Endothelial cell of umbilical vein (primary cell): ENCODE measurements at regions of chr2 and their contacts with region 1.

Region 1: DNA sequence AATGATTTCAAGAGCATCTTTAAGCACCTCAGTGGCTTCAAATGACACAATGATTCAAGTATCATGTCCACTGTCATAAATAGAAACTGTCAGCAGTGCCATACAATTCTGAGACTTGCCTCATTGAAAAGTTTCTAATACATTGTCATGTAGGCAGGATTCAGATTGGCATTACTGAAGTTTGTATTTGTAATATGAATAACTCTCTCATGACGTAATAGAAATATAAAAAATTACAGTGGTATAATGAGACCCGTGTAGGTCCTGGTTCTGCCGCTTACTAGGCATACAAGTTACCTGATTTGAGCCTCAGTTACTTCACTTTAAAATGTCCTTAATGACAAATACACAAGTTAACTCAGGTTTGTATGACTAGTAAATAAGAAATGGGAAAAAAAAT is 1536.2 kb upstream of the NXPH2 start:
- DNase-seq: no peak
- H3K4me3 ChIP-seq: no peak overlapping the region
- H3K27ac ChIP-seq: no peak overlapping the region
- H3K4me1 ChIP-seq: no peaks in the 10 kb centered on the region
- H3K27me3 ChIP-seq: no peaks in the 10 kb centered on the region
- CTCF ChIP-seq: no peak
- POLR2A ChIP-seq: no peak

Region 2: DNA sequence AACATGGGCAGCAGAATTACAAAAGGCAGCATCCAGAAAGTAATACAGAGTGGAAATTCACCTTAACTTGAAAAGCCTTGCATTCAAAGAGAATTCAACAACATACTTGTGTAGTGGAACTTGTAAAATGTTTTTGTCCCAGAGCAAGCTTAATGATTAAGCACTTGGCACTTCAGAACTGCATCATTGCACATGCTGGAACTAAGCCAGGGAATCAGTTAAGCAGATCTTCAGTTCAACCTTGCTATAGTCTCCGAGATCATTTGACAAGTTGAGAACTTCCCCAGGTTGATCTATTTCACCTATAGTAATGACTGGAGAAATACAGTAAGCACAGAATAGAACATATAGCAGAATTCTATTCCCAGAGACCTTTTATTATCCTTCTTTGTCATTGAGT is 199.0 kb before region 1 on chr2:
- CTCF ChIA-PET with region 1: no interaction called
- POLR2A ChIA-PET with region 1: no interaction called
- dilution Hi-C with region 1: no loop called
- intact Hi-C with region 1: loop called (anchors 10 kb)
- DNase-seq: no peak
- H3K4me3 ChIP-seq: no peak overlapping the region
- H3K27ac ChIP-seq: no peak overlapping the region
- H3K4me1 ChIP-seq: no peaks in the 10 kb centered on the region
- H3K27me3 ChIP-seq: no peaks in the 10 kb centered on the region
- CTCF ChIP-seq: no peak
- POLR2A ChIP-seq: no peak

Region 3: GRCh38 chr2:140205093-140205492 is 111.3 kb before region 1 on chr2:
- CTCF ChIA-PET with region 1: no interaction called
- POLR2A ChIA-PET with region 1: no interaction called
- dilution Hi-C with region 1: no loop called
- intact Hi-C with region 1: no loop called
- DNase-seq: no peak
- H3K4me3 ChIP-seq: no peak overlapping the region
- H3K27ac ChIP-seq: no peak overlapping the region
- H3K4me1 ChIP-seq: no peaks in the 10 kb centered on the region
- H3K27me3 ChIP-seq: no peaks in the 10 kb centered on the region
- CTCF ChIP-seq: no peak
- POLR2A ChIP-seq: no peak

Region 4: DNA sequence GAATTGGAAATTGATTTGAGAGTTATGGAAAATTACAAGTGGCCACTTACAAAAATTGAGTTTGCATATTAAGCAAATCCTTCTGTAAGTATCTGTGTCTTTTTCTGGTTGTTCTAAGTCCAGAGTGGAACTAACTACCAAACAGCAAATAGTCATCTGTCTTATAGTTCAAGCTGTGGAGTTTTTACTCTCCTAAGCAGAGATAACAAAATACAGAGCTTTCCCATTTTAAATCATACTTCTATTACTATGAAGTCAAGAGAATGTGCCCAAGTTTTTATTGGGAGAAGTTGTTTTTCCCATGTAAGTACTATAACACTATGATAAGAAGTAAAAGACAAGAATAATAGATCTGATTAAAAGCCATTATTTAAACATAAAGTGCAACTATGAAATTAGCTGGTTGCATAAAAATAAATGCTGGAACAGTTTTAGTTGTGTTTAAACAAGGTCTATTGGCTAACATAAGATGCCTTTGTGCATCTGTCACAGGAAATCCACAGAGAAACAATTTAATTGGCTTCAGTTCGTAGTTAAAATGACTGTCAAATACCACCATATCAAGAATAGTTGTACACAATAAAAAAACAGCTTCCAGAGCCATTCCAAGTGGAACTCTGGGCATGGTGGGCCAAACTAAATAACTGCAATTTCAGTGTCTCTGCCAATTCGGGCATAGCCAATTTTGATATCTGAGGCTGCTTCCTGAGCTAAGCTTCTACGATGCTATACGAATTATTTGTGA is 68.7 kb before region 1 on chr2:
- CTCF ChIA-PET with region 1: no interaction called
- POLR2A ChIA-PET with region 1: no interaction called
- dilution Hi-C with region 1: no loop called
- intact Hi-C with region 1: no loop called
- DNase-seq: no peak
- H3K4me3 ChIP-seq: no peak overlapping the region
- H3K27ac ChIP-seq: no peak overlapping the region
- H3K4me1 ChIP-seq: no peaks in the 10 kb centered on the region
- H3K27me3 ChIP-seq: no peaks in the 10 kb centered on the region
- CTCF ChIP-seq: no peak
- POLR2A ChIP-seq: no peak

Region 5: DNA sequence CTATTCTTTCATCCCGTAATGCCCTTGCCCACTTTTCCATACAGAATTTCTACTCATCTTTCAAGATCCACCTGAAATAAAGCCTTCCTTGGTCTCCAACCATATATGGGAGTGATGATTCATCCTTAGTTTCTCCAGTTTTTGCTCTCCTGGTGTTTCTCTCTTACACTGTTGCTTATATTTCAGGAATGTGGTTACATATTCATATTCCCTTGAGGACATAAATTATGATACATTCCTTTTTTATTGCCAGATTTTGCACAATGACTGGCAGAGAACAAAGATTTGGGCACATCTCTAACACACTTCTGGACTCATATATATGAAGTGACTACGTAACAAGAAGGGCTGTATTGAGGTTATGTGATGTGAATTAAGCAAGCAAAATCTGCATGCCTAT is 37.2 kb after region 1 on chr2:
- CTCF ChIA-PET with region 1: no interaction called
- POLR2A ChIA-PET with region 1: no interaction called
- dilution Hi-C with region 1: no loop called
- intact Hi-C with region 1: no loop called
- DNase-seq: no peak
- H3K4me3 ChIP-seq: no peak overlapping the region
- H3K27ac ChIP-seq: no peak overlapping the region
- H3K4me1 ChIP-seq: no peaks in the 10 kb centered on the region
- H3K27me3 ChIP-seq: no peaks in the 10 kb centered on the region
- CTCF ChIP-seq: no peak
- POLR2A ChIP-seq: no peak